Caco-2 (cell line): ENCODE measurements at regions of chr2 and their contacts with region 1.

Region 1: DNA sequence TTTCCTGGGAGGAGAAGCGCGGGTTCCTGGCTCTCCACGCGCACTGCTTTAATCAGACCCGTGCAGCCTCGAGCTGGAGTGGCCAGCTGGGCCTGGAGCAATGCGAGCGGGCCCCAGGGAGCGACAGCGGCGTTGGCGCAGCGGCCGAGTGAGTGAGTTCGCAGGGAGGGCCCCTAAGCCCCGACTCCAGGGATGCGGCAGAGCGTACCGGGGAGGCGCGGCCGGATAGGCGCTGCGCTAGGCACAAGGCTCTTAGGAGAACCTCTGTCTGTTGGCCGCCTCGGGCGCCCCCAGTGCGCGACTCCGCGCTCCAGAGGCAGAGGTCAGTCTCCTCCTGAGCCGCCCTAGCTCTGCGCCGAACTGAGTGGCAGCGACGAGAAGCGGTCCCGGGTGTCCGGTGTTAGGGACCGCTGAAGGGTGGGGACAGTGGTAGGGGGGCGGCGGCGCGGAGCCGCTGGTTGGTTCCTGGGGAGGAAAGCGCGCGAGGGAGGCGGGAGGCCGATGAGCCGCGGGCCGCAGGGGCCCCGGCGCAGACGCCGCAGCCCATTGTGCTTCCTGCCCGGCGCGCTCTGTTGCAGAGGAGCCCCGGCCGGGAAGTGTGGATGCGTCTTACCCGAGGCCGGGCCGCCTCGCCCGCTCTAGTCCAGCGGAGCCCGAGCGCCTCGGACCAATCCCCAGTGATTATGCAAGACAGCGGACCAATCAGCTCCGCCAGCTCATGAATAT is 410 bp upstream of the DLX1 start:
- DNase-seq: peak; percentile 93
- H3K4me3 ChIP-seq: peak overlapping the region; percentile 49
- H3K4me3 Mint-ChIP-seq: peak overlapping the region; percentile 95
- H3K27ac Mint-ChIP-seq: peak overlapping the region; percentile 63
- H3K4me1 ChIP-seq: no peaks in the 10 kb centered on the region
- H3K4me1 Mint-ChIP-seq: no peaks in the 10 kb centered on the region
- H3K27me3 ChIP-seq: no peaks in the 10 kb centered on the region
- H3K27me3 Mint-ChIP-seq: peaks cover 14% of the 10 kb centered on the region
- CTCF ChIP-seq: no peak

Region 2: DNA sequence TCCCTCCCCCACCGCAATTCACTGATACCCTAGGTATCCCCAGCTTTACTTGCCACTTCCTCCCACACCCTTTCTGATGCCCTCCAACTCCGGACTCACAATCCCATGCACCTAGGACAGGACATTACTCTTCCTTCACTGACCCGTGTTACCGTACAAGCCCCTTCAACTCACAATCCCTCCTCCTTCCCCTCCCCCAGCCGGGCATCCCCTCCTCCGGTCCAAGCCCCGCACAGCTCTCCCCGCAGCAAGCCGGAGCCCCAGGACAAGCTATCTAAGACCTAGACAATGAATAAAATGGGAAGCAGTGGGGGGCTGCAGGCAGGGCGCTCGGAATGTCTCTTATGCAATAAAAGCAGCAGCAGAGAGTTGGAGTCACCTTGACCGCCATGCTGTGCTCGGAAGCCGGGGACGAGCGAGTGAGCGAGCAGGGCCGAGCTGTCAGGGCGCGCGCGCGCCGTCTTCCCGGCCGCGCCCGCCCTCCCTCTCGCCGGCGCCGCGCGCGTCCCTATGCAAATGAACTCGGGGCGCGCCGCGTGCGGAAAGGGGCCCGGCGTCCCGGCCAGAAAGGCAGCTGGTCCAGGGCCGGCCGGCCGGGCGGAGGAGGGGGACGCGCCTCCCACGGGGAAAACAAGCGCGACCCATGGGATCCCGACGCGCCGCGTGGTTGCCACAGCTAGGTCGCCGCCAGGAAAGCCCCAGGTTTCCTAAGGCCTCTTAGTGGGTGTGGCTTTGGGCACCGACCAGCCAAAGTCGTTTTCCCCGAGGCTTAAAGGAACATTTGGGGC is 190.9 kb before region 1 on chr2 and contains the start of gene SLC25A12:
- CTCF ChIA-PET with region 1: no interaction called
- POLR2A ChIA-PET with region 1: no interaction called
- intact Hi-C with region 1: no loop called
- DNase-seq: peak; percentile 74 to 86
- H3K4me3 ChIP-seq: peak within 1 kb of the TSS; percentile 60
- H3K4me3 Mint-ChIP-seq: peak within 1 kb of the TSS; percentile 86
- H3K27ac Mint-ChIP-seq: no peak within 1 kb of the TSS
- H3K4me1 ChIP-seq: peaks cover 8% of the 10 kb centered on the region
- H3K4me1 Mint-ChIP-seq: peaks cover 14% of the 10 kb centered on the region
- H3K27me3 ChIP-seq: no peaks in the 10 kb centered on the region
- H3K27me3 Mint-ChIP-seq: peaks cover 6% of the 10 kb centered on the region
- CTCF ChIP-seq: no peak
- total RNA-seq, gene SLC25A12: 5.0 and 5.3 TPM in 2 replicates

Region 3: GRCh38 chr2:171999604-172000469 is 85.1 kb before region 1 on chr2 and contains the start of gene METAP1D:
- CTCF ChIA-PET with region 1: no interaction called
- POLR2A ChIA-PET with region 1: no interaction called
- intact Hi-C with region 1: loop called (anchors 10 kb)
- DNase-seq: peak; percentile 94 to 98
- H3K4me3 ChIP-seq: peak within 1 kb of the TSS; percentile 55
- H3K4me3 Mint-ChIP-seq: peak within 1 kb of the TSS; percentile 99
- H3K27ac Mint-ChIP-seq: peak within 1 kb of the TSS; percentile 99
- H3K4me1 ChIP-seq: peaks cover 5% of the 10 kb centered on the region; the same call in 1 of the 2 replicates
- H3K4me1 Mint-ChIP-seq: peaks cover 10% of the 10 kb centered on the region
- H3K27me3 ChIP-seq: no peaks in the 10 kb centered on the region
- H3K27me3 Mint-ChIP-seq: no peaks in the 10 kb centered on the region
- CTCF ChIP-seq: no peak
- total RNA-seq, gene METAP1D: 8.5 and 10.4 TPM in 2 replicates

Region 4: DNA sequence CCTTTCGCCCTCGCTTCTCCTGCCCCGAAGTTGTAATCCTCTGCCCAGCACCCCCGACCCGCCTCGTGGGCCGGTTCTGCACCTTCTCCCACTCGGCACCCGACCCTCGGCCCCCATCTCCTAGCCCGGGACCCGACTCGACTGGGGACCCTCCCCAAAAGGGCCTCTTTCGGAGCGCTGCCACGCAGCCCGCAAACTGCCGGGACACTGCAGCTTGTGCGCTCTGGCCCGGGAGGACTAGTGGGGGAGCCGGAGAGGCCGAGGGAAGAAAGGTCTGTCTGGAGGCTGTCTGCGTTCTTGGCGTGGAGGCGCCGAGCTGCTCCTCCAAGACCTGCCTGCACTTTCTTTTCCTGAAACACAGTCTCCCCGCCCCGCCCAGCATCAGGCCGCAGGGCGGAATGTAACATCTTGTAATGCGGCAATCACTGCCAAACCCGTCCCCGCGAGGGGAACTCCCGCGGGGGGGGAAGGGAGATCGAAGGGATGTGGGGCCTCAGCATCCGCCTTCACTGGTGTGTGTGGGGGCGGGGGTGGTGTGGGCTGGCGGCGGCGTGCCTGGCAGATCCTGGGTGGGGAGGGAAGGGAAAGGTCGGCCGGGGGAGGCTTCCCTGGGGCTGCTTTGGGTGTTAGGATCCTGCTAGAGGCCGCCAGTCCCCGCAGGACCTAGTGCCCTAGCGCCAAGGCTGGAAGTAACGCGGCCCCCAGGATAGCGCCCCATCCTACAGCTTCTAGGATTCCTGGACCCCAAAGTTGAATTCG is 10.4 kb after region 1 on chr2:
- CTCF ChIA-PET with region 1: interaction called, 11 read pairs
- POLR2A ChIA-PET with region 1: interaction called, 13 read pairs
- intact Hi-C with region 1: loop called (anchors 1 kb)
- DNase-seq: peak; percentile 62 to 68
- H3K4me3 ChIP-seq: peak overlapping the region; percentile 32
- H3K4me3 Mint-ChIP-seq: peak overlapping the region; percentile 71
- H3K27ac Mint-ChIP-seq: no peak overlapping the region
- H3K4me1 ChIP-seq: peaks cover 11% of the 10 kb centered on the region
- H3K4me1 Mint-ChIP-seq: peaks cover 13% of the 10 kb centered on the region
- H3K27me3 ChIP-seq: 0 out of 2 replicates have a peak, but pooled peaks cover 2% of the 10 kb centered on the region
- H3K27me3 Mint-ChIP-seq: peaks cover 10% of the 10 kb centered on the region
- CTCF ChIP-seq: no peak